ENCODE measurements at regions of chrX and their contacts with region 1.

Region 1: GRCh38 chrX:101595739-101596419 is 21.9 kb downstream of the ARMCX6 start:
- DNase-seq: peak; percentile 23
- ATAC-seq: peak; percentile 80
- H3K4me3 Mint-ChIP-seq: no peak overlapping the region
- H3K27ac Mint-ChIP-seq: no peak overlapping the region
- H3K4me1 Mint-ChIP-seq: no peaks in the 10 kb centered on the region
- H3K27me3 Mint-ChIP-seq: peaks cover 7% of the 10 kb centered on the region
- CTCF ChIP-seq: peak; percentile 40

Region 2: GRCh38 chrX:101799387-101799786 is 203.5 kb after region 1 on chrX:
- CTCF ChIA-PET with region 1: no interaction called
- POLR2A ChIA-PET with region 1: no interaction called
- intact Hi-C with region 1: loop called (anchors 5 kb)
- DNase-seq: peak; percentile 89
- ATAC-seq: peak; percentile 100
- H3K4me3 Mint-ChIP-seq: peak overlapping the region; percentile 64
- H3K27ac Mint-ChIP-seq: peak overlapping the region; percentile 52
- H3K4me1 Mint-ChIP-seq: no peaks in the 10 kb centered on the region
- H3K27me3 Mint-ChIP-seq: no peaks in the 10 kb centered on the region
- CTCF ChIP-seq: peak; percentile 60

Measured in activated CD8-positive, alpha-beta T cell treated with anti-CD3 and anti-CD28 coated beads for 36 hours (primary cell).